ENCODE measurements at regions of chr12 and their contacts with region 1.

Region 1: DNA sequence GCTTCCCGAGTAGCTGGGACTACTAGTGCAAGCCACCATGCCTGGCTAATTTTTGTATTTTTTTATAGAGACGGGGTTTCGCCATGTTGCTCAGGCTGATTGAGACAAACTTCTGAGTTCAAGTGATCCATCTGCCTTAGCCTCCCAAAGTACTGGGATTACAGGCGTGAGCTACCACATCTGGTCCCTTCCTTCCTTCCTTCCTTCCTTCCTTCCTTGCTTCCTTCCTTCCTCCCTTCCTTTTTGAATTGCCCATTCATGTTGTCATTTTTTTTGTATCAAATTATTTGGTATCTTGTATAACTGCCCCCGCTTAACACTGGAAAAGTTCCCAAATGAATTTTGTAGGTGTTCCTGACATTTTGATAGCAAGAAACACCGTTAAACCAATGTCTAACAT is 11.7 kb downstream of the RAD9B start:
- DNase-seq: no peak
- H3K4me3 ChIP-seq: no peak overlapping the region
- H3K27ac ChIP-seq: no peak overlapping the region
- H3K4me1 ChIP-seq: no peaks in the 10 kb centered on the region
- H3K27me3 ChIP-seq: no peaks in the 10 kb centered on the region
- CTCF ChIP-seq: no peak
- POLR2A ChIP-seq: no peak

Region 2: GRCh38 chr12:110543252-110543959 is 29.6 kb after region 1 on chr12:
- CTCF ChIA-PET with region 1: interaction called, 6 read pairs
- POLR2A ChIA-PET with region 1: interaction called, 3 read pairs
- dilution Hi-C with region 1: no loop called
- intact Hi-C with region 1: loop called (anchors 2 kb)
- DNase-seq: peak; percentile 88
- H3K4me3 ChIP-seq: no peak overlapping the region
- H3K27ac ChIP-seq: peak overlapping the region; percentile 25
- H3K4me1 ChIP-seq: peaks cover 61% of the 10 kb centered on the region
- H3K27me3 ChIP-seq: no peaks in the 10 kb centered on the region
- CTCF ChIP-seq: no peak
- POLR2A ChIP-seq: peak; percentile 22